Activated CD4-positive, alpha-beta memory T cell treated with anti-CD3 and anti-CD28 coated beads for 36 hours (primary cell): ENCODE measurements at regions of chr10 and their contacts with region 1.

Region 1: GRCh38 chr10:123132576-123133477 is 2.9 kb upstream of the HMX3 start:
- DNase-seq: peak; percentile 92
- H3K4me3 Mint-ChIP-seq: peak overlapping the region; percentile 64
- H3K27ac Mint-ChIP-seq: no peak overlapping the region
- H3K4me1 Mint-ChIP-seq: peaks cover 24% of the 10 kb centered on the region
- H3K27me3 Mint-ChIP-seq: peaks cover 58% of the 10 kb centered on the region

Region 2: GRCh38 chr10:123043409-123043925 is 89.4 kb before region 1 on chr10:
- CTCF ChIA-PET with region 1: interaction called, 4 read pairs
- POLR2A ChIA-PET with region 1: no interaction called
- intact Hi-C with region 1: loop called (anchors 1 kb)
- DNase-seq: peak; percentile 49
- H3K4me3 Mint-ChIP-seq: no peak overlapping the region
- H3K27ac Mint-ChIP-seq: no peak overlapping the region
- H3K4me1 Mint-ChIP-seq: no peaks in the 10 kb centered on the region
- H3K27me3 Mint-ChIP-seq: no peaks in the 10 kb centered on the region

Region 3: GRCh38 chr10:123061865-123062264 is 71.0 kb before region 1 on chr10:
- CTCF ChIA-PET with region 1: no interaction called
- POLR2A ChIA-PET with region 1: no interaction called
- intact Hi-C with region 1: no loop called
- DNase-seq: no peak
- H3K4me3 Mint-ChIP-seq: no peak overlapping the region
- H3K27ac Mint-ChIP-seq: no peak overlapping the region
- H3K4me1 Mint-ChIP-seq: no peaks in the 10 kb centered on the region
- H3K27me3 Mint-ChIP-seq: peaks cover 10% of the 10 kb centered on the region

Region 4: GRCh38 chr10:123147635-123148413 is 15.0 kb after region 1 on chr10 and contains the start of gene HMX2:
- CTCF ChIA-PET with region 1: interaction called, 24 read pairs
- POLR2A ChIA-PET with region 1: interaction called, 4 read pairs
- intact Hi-C with region 1: loop called (anchors 1 kb)
- DNase-seq: peak; percentile 64
- H3K4me3 Mint-ChIP-seq: peak within 1 kb of the TSS; percentile 58
- H3K27ac Mint-ChIP-seq: peak within 1 kb of the TSS; percentile 39
- H3K4me1 Mint-ChIP-seq: peaks cover 49% of the 10 kb centered on the region
- H3K27me3 Mint-ChIP-seq: peaks cover 58% of the 10 kb centered on the region
- total RNA-seq, gene HMX2: 0.31 to 0.43 TPM

Region 5: GRCh38 chr10:123175389-123176387 is 42.9 kb after region 1 on chr10:
- CTCF ChIA-PET with region 1: no interaction called
- POLR2A ChIA-PET with region 1: no interaction called
- intact Hi-C with region 1: no loop called
- DNase-seq: no peak
- H3K4me3 Mint-ChIP-seq: no peak overlapping the region
- H3K27ac Mint-ChIP-seq: no peak overlapping the region
- H3K4me1 Mint-ChIP-seq: peaks cover 5% of the 10 kb centered on the region
- H3K27me3 Mint-ChIP-seq: no peaks in the 10 kb centered on the region

Region 6: DNA sequence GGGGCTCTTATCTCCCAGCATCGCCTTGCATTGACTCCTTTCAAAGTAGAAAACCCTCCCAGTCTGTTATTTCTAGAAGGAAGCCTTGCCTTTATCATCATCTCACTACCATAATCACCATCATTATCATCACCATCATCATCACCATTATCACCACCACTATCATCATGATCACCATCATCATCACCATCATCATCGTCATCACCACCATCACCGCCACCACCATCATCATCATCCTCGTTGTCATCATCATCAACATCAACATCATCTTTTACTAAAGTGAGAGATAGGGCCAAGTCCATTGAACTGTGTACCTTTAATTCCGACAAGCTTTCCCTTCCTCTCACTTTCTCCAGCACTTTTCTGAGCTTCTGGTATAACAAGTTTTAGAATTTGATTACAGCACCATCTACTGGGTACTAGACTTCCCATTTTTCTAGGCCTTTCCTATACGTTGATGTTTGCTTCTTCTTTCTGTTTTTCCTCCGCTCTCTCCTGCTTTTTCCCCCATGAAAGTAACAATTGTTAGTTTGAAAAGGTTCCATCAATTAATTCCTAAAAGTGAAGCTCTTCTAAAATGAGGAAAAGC is 247.8 kb after region 1 on chr10:
- CTCF ChIA-PET with region 1: interaction called, 14 read pairs
- POLR2A ChIA-PET with region 1: no interaction called
- intact Hi-C with region 1: loop called (anchors 1 kb)
- DNase-seq: no peak
- H3K4me3 Mint-ChIP-seq: no peak overlapping the region
- H3K27ac Mint-ChIP-seq: no peak overlapping the region
- H3K4me1 Mint-ChIP-seq: no peaks in the 10 kb centered on the region
- H3K27me3 Mint-ChIP-seq: peaks cover 3% of the 10 kb centered on the region

Region 7: GRCh38 chr10:123559066-123559822 is 426.4 kb after region 1 on chr10:
- CTCF ChIA-PET with region 1: interaction called, 12 read pairs
- POLR2A ChIA-PET with region 1: no interaction called
- intact Hi-C with region 1: loop called (anchors 1 kb)
- DNase-seq: peak; percentile 73
- H3K4me3 Mint-ChIP-seq: no peak overlapping the region
- H3K27ac Mint-ChIP-seq: no peak overlapping the region
- H3K4me1 Mint-ChIP-seq: no peaks in the 10 kb centered on the region
- H3K27me3 Mint-ChIP-seq: peaks cover 5% of the 10 kb centered on the region

Region 8: DNA sequence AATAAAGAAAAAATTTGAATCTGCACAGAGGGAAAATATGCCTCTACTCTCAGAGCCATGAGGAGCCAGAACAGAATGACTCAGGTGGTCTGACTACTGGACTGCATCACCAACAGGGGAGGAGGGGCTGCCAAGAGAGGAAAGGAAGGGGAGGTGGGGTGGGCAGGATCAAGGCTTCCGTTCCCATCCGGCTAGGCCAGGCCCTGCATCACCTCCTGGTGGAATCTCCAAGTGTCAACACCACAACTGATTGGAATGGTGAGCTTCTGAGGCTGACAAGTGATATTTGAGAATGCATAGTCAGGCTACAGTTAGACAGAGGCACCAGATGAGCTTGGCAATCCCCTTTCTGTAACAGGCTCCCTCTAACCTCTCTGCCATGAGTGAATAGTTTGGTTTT is 522.9 kb after region 1 on chr10:
- CTCF ChIA-PET with region 1: no interaction called
- POLR2A ChIA-PET with region 1: no interaction called
- intact Hi-C with region 1: no loop called
- DNase-seq: no peak
- H3K4me3 Mint-ChIP-seq: no peak overlapping the region
- H3K27ac Mint-ChIP-seq: no peak overlapping the region
- H3K4me1 Mint-ChIP-seq: no peaks in the 10 kb centered on the region
- H3K27me3 Mint-ChIP-seq: peaks cover 2% of the 10 kb centered on the region

Region 9: DNA sequence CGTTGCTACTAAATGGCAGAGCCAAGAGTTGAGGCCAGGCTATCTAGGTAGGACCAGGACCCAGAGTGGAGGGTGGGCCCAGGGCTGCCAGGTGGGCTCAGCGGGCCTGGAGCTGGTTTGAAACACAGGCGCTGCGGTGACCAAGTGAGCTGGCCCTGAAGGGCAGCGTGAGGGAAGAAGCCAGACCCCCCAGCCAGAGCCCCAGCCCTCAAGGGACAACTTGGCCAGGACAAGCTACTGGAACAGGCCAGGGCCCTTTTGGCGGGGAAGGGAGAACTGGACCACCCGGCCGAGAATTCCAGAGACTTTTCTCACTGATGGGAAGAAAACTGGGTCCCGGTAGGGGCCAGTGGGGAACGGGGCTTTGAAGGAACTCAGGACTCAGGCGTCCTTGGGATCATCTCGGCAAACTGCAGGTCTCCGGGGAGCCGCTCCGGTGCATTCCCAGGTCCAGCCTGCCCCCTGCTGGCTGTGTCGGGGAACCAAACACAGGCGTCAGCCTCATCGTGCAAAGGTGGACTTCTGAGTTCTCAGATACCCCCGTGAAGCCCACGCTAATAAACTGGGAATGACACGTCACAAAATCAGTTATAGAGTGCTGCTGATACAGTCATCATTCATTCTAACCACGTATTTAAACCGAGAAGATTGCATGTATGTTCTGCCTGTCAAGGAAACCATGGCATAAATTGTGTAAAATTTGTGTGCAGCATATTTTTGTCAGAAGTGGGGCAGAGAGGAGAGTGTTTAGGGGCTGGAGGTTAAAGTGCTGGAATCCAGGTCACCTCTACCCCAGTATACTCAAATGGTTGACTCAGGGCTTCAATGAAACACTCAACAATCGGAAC is 834.8 kb after region 1 on chr10:
- CTCF ChIA-PET with region 1: no interaction called
- POLR2A ChIA-PET with region 1: no interaction called
- intact Hi-C with region 1: loop called (anchors 2 kb)
- DNase-seq: peak; percentile 69
- H3K4me3 Mint-ChIP-seq: no peak overlapping the region
- H3K27ac Mint-ChIP-seq: no peak overlapping the region
- H3K4me1 Mint-ChIP-seq: no peaks in the 10 kb centered on the region
- H3K27me3 Mint-ChIP-seq: peaks cover 55% of the 10 kb centered on the region

Region 10: GRCh38 chr10:124447741-124448466 is 1315.1 kb after region 1 on chr10:
- CTCF ChIA-PET with region 1: no interaction called
- POLR2A ChIA-PET with region 1: no interaction called
- intact Hi-C with region 1: loop called (anchors 10 kb)
- DNase-seq: no peak
- H3K4me3 Mint-ChIP-seq: peak overlapping the region; percentile 12
- H3K27ac Mint-ChIP-seq: no peak overlapping the region
- H3K4me1 Mint-ChIP-seq: peaks cover 24% of the 10 kb centered on the region
- H3K27me3 Mint-ChIP-seq: peaks cover 66% of the 10 kb centered on the region